ENCODE measurements at regions of chr13 and their contacts with region 1.

Region 1: GRCh38 chr13:35940734-35941133 is 190.4 kb downstream of the DCLK1 start:
- DNase-seq: no peak
- H3K4me3 ChIP-seq: no peak overlapping the region
- H3K27ac ChIP-seq: peak overlapping the region in 9 of 59 donors; percentile 10 to 42 (median 25)
- H3K27me3 ChIP-seq: no peaks in the 10 kb centered on the region
- CTCF ChIP-seq: no peak

Region 2: GRCh38 chr13:35888457-35888883 is 52.3 kb before region 1 on chr13:
- intact Hi-C with region 1: loop called in 1 of 2 experiments (anchors 10 kb)
- DNase-seq: no peak
- H3K4me3 ChIP-seq: no peak overlapping the region
- H3K27ac ChIP-seq: peak overlapping the region in 43 of 59 donors; percentile 0 to 72 (median 42)
- H3K27me3 ChIP-seq: no peaks in the 10 kb centered on the region
- CTCF ChIP-seq: no peak